Left ventricle myocardium inferior (tissue), 1 donor: ENCODE measurements at regions of chr3 and their contacts with region 1.

Region 1: DNA sequence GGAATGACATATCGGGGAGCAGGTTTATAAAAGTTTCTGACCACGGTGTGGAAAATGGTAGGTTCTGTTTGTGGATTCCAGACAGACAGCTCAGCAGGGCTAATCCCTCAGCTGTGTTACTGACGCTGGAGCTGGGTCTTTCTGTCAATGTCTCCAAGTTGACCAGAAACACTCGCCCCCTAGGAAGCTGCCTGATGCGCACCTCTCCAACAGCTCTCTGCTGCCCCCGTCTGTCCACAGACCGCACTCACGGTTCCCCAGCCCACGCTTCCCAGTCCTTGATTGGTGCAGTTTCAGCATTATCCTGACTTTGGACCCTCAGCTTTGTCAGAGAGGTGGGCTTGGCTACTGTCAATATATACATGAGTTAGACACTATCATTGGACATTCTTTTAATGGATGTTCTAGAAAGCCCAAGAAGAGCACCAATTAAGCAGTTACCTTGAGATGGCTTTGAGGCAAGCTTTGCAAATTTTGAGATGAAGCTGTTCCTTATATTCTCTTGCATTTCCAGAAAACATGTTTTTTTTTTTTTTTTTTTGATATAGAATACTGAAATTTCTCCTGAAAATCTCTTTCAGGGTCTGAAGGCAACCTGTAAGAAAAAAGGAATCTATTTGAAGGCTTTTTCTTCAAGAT is 98.9 kb upstream of the TBC1D5 start:
- DNase-seq: peak; percentile 59
- H3K4me3 ChIP-seq: no peak overlapping the region
- H3K27ac ChIP-seq: no peak overlapping the region
- H3K4me1 ChIP-seq: no peaks in the 10 kb centered on the region
- H3K27me3 ChIP-seq: peaks cover 4% of the 10 kb centered on the region
- CTCF ChIP-seq: peak; percentile 97

Region 2: DNA sequence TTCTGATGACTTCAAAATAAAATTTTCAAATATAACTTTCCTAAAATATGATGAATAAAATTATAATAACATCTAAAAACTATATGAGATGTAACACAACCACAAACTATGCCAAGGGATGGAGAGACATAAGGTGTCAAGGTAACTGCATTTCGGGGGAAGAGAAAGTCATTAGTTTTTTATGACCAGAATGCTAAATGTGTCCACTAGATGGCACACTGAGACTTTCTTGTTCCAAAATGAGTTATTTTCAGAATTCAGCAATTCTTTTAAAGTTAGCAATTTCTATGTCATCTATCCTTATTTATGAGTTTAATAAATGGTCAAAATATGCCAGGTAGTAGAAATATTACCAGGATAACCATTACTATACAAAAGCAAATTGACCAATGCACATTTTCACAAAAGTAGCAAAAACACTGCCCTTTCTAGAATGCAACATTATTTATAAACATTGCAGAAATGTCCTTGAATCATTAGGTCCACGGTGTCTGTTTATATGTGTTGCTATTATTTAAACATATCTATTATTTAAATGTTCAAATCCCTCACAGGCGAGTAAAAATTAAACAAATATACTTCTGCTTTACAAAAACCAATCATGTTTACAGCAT is 582.4 kb before region 1 on chr3:
- intact Hi-C with region 1: loop called (anchors 5 kb)
- DNase-seq: no peak
- H3K4me3 ChIP-seq: no peak overlapping the region
- H3K27ac ChIP-seq: no peak overlapping the region
- H3K4me1 ChIP-seq: peaks cover 3% of the 10 kb centered on the region
- H3K27me3 ChIP-seq: no peaks in the 10 kb centered on the region
- CTCF ChIP-seq: peak; percentile 83

Region 3: DNA sequence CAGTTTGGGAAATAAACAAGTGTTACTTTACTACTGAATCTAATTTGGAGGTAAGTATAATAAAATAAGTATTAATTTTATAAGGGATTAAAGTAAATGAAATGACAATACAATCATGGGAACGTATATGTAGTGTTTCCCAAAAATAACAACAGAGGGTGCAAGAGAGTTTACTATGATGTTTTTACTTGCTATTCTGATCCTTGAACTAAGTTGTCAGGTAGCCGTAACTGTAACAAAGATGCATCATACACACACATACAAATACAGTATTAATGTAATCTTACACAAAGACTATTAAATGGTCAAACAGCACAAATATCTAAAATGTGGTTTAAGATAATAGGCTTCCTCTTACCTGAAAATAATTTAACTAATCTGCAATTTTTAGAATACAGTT is 410.3 kb before region 1 on chr3:
- intact Hi-C with region 1: loop called (anchors 5 kb)
- DNase-seq: no peak
- H3K4me3 ChIP-seq: no peak overlapping the region
- H3K27ac ChIP-seq: no peak overlapping the region
- H3K4me1 ChIP-seq: peaks cover 6% of the 10 kb centered on the region
- H3K27me3 ChIP-seq: no peaks in the 10 kb centered on the region
- CTCF ChIP-seq: peak; percentile 67

Region 4: GRCh38 chr3:17605032-17605431 is 236.3 kb before region 1 on chr3:
- intact Hi-C with region 1: no loop called
- DNase-seq: no peak
- H3K4me3 ChIP-seq: no peak overlapping the region
- H3K27ac ChIP-seq: no peak overlapping the region
- H3K4me1 ChIP-seq: no peaks in the 10 kb centered on the region
- H3K27me3 ChIP-seq: no peaks in the 10 kb centered on the region
- CTCF ChIP-seq: no peak

Region 5: DNA sequence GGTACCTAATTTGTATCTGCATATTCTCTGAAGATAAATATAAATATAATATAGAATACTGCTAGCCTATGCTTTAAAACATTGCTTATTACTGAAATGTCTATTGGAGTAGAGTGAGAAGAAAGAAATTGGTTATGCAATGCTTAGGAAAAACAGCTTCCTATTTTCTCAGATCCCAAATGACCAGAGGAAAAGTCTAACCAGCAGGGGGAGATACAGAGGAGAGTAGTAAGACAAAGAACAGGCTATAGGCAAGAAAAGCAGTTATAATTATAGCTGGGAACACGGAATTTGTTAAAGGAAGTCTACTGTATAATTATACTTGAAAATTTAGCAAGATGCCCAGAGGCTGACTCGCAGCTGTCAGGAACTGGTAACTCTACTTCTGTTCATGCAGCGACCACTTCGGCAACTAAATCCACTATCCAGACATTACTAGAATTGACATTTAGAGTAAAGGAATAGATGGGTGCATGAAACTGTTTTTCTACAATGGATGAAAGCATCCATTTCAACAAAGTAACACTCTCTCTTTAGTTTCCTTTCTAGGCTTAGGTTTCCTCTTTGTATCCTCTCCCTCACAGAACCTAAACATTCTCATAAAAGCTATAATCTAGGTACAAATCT is 196.1 kb before region 1 on chr3:
- intact Hi-C with region 1: loop called (anchors 2 kb)
- DNase-seq: no peak
- H3K4me3 ChIP-seq: no peak overlapping the region
- H3K27ac ChIP-seq: no peak overlapping the region
- H3K4me1 ChIP-seq: peaks cover 38% of the 10 kb centered on the region
- H3K27me3 ChIP-seq: no peaks in the 10 kb centered on the region
- CTCF ChIP-seq: peak; percentile 80

Region 6: GRCh38 chr3:17742108-17742879 is 99.0 kb before region 1 on chr3 and contains the start of gene TBC1D5:
- intact Hi-C with region 1: no loop called
- DNase-seq: peak; percentile 96
- H3K4me3 ChIP-seq: peak within 1 kb of the TSS; percentile 94
- H3K27ac ChIP-seq: peak within 1 kb of the TSS; percentile 99
- H3K4me1 ChIP-seq: peaks cover 57% of the 10 kb centered on the region
- H3K27me3 ChIP-seq: no peaks in the 10 kb centered on the region
- CTCF ChIP-seq: no peak
- total RNA-seq, gene TBC1D5: 26.9 TPM